Lower leg skin (tissue), 4 donors: ENCODE measurements at regions of chr1 and their contacts with region 1.

Region 1: DNA sequence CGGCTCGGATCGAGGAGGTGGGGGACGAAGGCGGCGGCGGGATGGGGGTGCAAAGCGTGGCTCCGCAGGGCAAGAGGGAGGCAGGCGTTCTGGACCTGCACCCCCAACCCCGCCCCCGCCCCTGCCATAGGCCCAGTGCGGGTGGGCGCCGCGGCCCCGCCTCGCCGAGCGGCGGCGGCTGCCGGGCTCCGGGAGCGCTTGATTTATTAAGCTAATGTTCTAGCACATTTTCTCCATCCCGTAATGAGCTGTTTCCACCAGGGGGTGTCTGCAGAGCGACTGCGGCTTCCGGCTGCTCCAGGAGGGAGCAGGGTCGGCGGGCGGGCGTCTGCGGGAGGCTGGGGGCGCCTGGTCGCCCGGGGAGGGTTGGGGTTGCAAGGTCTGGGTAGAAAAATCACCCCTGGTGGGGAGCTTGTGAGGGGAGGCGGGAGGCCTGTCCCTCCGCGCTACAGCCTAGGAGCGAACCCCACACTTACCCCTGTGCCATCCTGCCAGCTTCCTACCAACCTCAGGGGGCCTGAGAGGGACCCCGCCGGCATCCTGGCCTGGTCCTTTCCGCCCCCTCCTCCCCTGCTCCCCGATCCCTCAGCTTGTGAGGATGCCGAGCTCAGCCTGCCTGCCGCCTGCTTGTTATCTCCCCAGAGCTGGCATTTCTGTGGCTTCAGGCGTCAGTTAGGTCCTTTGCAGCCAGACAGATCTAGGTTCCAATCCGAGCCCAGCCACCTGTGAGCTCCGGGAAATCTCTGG is 48.5 kb upstream of the ACOT11 start:
- DNase-seq: no peak
- H3K4me3 ChIP-seq: no peak overlapping the region
- CTCF ChIP-seq: no peak
- POLR2A ChIP-seq: no peak

Region 2: DNA sequence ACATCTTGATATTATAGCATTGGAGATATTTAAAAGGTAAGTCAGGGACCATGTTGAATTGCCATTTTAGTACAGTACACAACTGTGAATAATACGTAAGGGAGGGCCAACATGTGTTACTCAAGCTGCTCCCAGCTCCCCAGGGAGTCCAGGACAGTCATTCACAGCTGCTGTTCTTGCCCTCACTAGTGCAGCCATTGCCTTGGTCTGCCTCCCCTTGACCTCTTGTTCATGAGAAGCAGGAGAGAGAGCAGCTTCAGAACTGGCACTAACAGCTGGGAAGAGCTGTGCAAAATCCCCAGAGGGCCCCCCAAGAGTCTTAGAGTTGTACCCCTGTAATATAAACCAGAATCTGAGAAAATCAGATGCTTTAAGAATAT is 429.8 kb before region 1 on chr1:
- intact Hi-C with region 1: loop called (anchors 10 kb)
- DNase-seq: no peak
- H3K4me3 ChIP-seq: no peak overlapping the region
- CTCF ChIP-seq: no peak
- POLR2A ChIP-seq: no peak

Region 3: GRCh38 chr1:54585181-54586066 is 85.9 kb after region 1 on chr1:
- intact Hi-C with region 1: no loop called
- DNase-seq: no peak
- H3K4me3 ChIP-seq: no peak overlapping the region
- CTCF ChIP-seq: no peak
- POLR2A ChIP-seq: no peak

Region 4: GRCh38 chr1:54996359-54996868 is 496.9 kb after region 1 on chr1:
- intact Hi-C with region 1: loop called (anchors 10 kb)
- DNase-seq: peak; percentile 28 to 94
- H3K4me3 ChIP-seq: no peak overlapping the region
- CTCF ChIP-seq: peak in 1 of 3 donors; percentile 83
- POLR2A ChIP-seq: no peak